WTC11 (cell line): ENCODE measurements at regions of chr9 and their contacts with region 1.

Region 1: GRCh38 chr9:77163884-77164283 is 13.4 kb upstream of the VPS13A start:
- DNase-seq: no peak
- ATAC-seq: no peak
- H3K4me3 Mint-ChIP-seq: no peak overlapping the region
- H3K27ac Mint-ChIP-seq: no peak overlapping the region
- H3K4me1 Mint-ChIP-seq: peaks cover 10% of the 10 kb centered on the region
- H3K27me3 Mint-ChIP-seq: no peaks in the 10 kb centered on the region; the same call in 1 of the 2 replicates
- CTCF ChIP-seq: no peak

Region 2: GRCh38 chr9:77014597-77015263 is 149.2 kb before region 1 on chr9:
- CTCF ChIA-PET with region 1: interaction called, 10 read pairs
- POLR2A ChIA-PET with region 1: no interaction called
- DNase-seq: peak; percentile 53
- ATAC-seq: no peak
- H3K4me3 Mint-ChIP-seq: peak overlapping the region; percentile 78
- H3K27ac Mint-ChIP-seq: no peak overlapping the region
- H3K4me1 Mint-ChIP-seq: peaks cover 64% of the 10 kb centered on the region
- H3K27me3 Mint-ChIP-seq: peaks cover 97% of the 10 kb centered on the region
- CTCF ChIP-seq: no peak

Region 3: DNA sequence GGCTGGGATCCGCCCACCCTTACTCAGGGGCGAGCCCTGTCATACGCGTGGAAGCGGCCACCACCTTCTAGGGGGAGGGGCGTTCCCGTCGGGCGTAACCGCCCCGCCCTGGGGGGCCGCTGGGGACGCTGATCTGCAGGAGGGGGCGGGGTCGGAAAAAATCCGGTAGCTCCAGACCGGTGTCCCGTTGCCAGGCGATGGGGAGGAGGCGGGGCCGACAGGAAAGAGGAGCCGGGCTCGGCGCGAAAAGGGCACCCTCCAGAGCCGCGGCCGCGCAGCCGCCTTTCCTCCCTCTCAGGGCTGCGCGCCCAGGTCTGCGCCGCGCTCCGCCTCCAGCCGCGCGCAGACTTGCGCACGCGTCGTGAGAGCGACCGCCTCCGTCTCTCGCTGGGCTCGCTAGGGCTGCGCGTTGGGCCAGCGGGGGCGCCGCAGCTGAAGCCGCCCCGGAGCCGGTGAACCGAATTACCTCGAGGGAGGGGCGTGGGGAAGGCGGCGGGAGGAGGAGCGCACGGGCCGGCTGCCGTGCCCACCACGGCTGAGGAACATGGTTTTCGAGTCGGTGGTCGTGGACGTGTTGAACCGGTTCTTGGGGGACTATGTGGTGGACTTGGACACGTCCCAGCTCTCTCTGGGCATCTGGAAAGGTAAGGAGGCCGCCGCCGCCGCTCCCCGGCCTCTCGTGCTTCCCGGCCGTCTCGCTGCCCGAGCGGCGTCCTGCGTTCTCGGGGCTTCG is 13.4 kb after region 1 on chr9 and contains the start of gene VPS13A:
- CTCF ChIA-PET with region 1: interaction called, 52 read pairs
- POLR2A ChIA-PET with region 1: interaction called, 4 read pairs
- DNase-seq: peak; percentile 99
- ATAC-seq: peak; percentile 92
- H3K4me3 Mint-ChIP-seq: peak within 1 kb of the TSS; percentile 93
- H3K27ac Mint-ChIP-seq: peak within 1 kb of the TSS; percentile 87
- H3K4me1 Mint-ChIP-seq: peaks cover 27% of the 10 kb centered on the region
- H3K27me3 Mint-ChIP-seq: peaks cover 7% of the 10 kb centered on the region
- CTCF ChIP-seq: no peak
- total RNA-seq, gene VPS13A: 25.5 to 31.5 TPM (median 28.0 TPM) in 3 replicates

Region 4: GRCh38 chr9:77215874-77216273 is 52.0 kb after region 1 on chr9:
- CTCF ChIA-PET with region 1: interaction called, 16 read pairs
- POLR2A ChIA-PET with region 1: no interaction called
- DNase-seq: no peak
- ATAC-seq: peak; percentile 64; the same call in 1 of the 2 replicates
- H3K4me3 Mint-ChIP-seq: no peak overlapping the region
- H3K27ac Mint-ChIP-seq: no peak overlapping the region
- H3K4me1 Mint-ChIP-seq: no peaks in the 10 kb centered on the region
- H3K27me3 Mint-ChIP-seq: no peaks in the 10 kb centered on the region
- CTCF ChIP-seq: no peak

Region 5: GRCh38 chr9:77291714-77292113 is 127.8 kb after region 1 on chr9:
- CTCF ChIA-PET with region 1: interaction called, 15 read pairs
- POLR2A ChIA-PET with region 1: no interaction called
- DNase-seq: no peak
- ATAC-seq: peak; percentile 95
- H3K4me3 Mint-ChIP-seq: no peak overlapping the region
- H3K27ac Mint-ChIP-seq: peak overlapping the region; percentile 91
- H3K4me1 Mint-ChIP-seq: peaks cover 21% of the 10 kb centered on the region
- H3K27me3 Mint-ChIP-seq: no peaks in the 10 kb centered on the region
- CTCF ChIP-seq: 0 out of 2 replicates have a peak, but pooled peaks have one; percentile 43